Sciatic nerve (tissue), 2 donors: ENCODE measurements at regions of chr7 and their contacts with region 1.

Region 1: DNA sequence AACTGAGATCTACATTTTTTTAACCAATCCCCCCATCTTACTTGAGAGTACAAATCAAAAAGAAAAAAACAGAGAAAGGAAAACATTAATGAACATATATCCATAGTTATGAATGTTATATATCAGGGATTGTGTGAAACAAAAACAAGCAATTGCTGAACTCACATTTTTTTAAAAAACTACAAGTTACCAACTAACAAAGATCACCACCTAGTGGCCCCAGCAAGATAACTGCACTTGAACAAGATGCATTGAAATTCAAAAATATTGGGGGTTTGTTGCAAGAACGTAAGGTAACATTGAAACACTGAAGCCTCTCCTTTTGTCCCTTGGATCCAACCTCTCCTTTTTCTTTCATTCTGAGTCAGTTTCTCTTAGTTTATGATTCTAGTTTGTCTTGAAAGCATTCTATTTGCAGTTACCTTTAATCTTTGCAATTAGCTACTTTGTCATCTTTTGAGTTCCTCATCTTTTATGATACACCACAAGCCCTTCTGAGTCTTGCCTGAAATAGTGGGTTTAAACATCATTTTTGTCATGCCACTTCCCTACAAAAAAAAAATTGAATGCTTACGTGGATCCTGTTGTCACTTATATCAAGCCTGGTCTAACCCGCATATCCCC is 87.3 kb upstream of the TES start:
- DNase-seq: no peak
- ATAC-seq: no peak

Region 2: GRCh38 chr7:116195451-116195850 is 72.4 kb after region 1 on chr7:
- intact Hi-C with region 1: no loop called
- DNase-seq: no peak
- ATAC-seq: no peak

Region 3: GRCh38 chr7:116616555-116617059 is 493.5 kb after region 1 on chr7:
- intact Hi-C with region 1: no loop called
- DNase-seq: no peak
- ATAC-seq: no peak

Region 4: DNA sequence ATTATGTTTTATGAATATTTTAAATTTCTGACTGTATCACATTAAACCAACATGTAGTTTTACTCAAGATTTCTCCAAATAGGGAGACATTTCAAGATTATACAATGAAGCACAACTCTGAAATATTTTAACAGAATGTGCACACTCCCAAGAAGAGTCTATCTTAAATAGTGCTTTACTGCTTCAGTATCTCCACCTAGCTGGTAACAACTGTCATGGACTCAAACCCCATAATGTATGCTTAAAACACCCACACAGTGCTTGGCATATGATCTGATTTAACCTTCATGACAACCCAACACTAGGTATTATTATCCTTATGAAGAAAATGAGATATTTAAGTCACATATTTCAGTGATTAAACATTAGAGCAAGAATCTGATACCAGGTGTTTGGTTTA is 1258.3 kb after region 1 on chr7:
- intact Hi-C with region 1: loop called (anchors 5 kb)
- DNase-seq: no peak
- ATAC-seq: no peak